ENCODE measurements at regions of chr11 and their contacts with region 1.

Region 1: GRCh38 chr11:16909359-16910035 is 104.7 kb downstream of the PLEKHA7 start:
- DNase-seq: peak; percentile 53
- ATAC-seq: peak; percentile 83
- H3K4me3 ChIP-seq: no peak overlapping the region
- H3K27ac ChIP-seq: peak overlapping the region; percentile 45
- H3K4me1 ChIP-seq: peaks cover 30% of the 10 kb centered on the region
- H3K27me3 ChIP-seq: no peaks in the 10 kb centered on the region
- CTCF ChIP-seq: no peak
- EP300 ChIP-seq: no peak
- POLR2A ChIP-seq: no peak
- RAD21 ChIP-seq: no peak

Region 2: DNA sequence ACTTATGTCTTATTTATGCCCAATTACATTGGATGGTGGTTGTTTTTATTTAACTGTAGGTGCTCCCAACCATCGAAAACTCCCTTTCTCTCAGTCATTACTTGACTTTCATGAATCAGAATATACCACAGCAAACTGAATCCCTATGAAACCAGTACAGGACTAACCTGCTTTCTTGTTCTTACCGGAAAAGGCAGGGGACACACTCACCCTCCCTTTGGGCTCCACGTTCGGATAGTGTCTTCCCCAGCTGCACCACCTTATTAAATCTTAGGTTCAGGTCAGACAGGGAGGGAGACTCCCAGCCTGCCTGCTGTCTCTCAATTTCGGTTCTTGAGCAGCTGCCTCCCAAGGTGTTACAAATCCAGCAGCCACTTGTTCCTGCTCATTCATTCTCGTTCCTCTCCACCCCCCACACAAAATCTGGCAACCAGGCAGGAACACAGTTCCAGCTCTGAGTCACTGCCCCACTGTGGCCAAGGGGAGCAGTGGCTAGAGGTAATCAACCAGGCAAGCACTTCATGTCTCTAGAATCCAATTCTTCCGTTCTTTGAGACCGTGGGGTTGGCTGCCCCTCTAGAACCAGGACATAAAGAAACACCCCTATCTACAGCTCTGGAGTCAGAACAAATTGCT is 28.3 kb before region 1 on chr11:
- CTCF ChIA-PET with region 1: interaction called, 6 read pairs
- POLR2A ChIA-PET with region 1: no interaction called
- RAD21 ChIA-PET with region 1: interaction called, 3 read pairs
- SMC1A ChIA-PET with region 1: interaction called, 17 read pairs
- in situ Hi-C with region 1: no loop called
- intact Hi-C with region 1: no loop called
- DNase-seq: no peak
- ATAC-seq: peak; percentile 72
- H3K4me3 ChIP-seq: no peak overlapping the region
- H3K27ac ChIP-seq: no peak overlapping the region
- H3K4me1 ChIP-seq: peaks cover 3% of the 10 kb centered on the region; the same call in 1 of the 2 replicates
- H3K27me3 ChIP-seq: no peaks in the 10 kb centered on the region; a peak in 1 of 4 replicates
- CTCF ChIP-seq: peak in 1 of 3 experiments; percentile 21; a peak in 2 of 6 replicates
- EP300 ChIP-seq: no peak
- POLR2A ChIP-seq: no peak
- RAD21 ChIP-seq: peak; percentile 29

Region 3: DNA sequence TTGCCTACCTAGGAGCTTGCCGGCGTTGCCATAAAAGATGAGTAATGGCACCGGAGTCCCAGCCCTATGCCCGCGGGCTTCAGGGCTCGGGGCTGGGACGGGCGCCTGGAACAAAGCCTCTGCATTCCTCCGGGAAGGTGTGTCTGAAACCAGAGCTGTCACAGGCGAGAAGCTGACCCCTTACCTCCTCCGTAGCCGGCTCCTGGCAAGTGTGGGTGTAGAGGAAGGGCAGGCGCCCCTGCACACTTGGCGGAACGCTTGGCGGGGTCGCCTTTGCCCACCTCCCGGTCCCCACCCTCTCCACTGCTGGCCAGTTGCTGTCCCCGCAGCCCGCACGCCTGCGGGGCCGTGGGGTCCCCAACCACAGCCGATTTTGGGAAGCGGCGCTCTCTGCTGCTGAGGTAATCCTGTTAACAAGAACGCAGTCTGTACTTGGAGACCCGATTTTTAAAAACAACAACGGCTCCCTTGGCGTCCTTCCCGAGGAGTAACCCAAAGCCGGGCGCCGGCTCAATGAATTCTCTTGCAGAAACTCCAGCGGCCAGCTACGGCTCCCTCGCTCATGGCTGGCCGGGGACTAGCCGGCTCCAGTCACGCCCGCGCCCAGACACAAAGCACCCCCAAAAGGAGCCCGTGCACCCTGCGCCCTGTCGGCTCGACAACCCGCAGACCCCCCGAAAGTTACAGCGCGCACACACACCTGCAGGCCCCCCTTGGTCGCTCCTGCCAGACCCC is 15.5 kb after region 1 on chr11:
- CTCF ChIA-PET with region 1: interaction called, 22 read pairs
- POLR2A ChIA-PET with region 1: interaction called, 4 read pairs
- RAD21 ChIA-PET with region 1: interaction called, 30 read pairs
- SMC1A ChIA-PET with region 1: interaction called, 82 read pairs
- in situ Hi-C with region 1: no loop called
- intact Hi-C with region 1: no loop called
- DNase-seq: no peak
- ATAC-seq: peak; percentile 39
- H3K4me3 ChIP-seq: peak overlapping the region; percentile 64
- H3K27ac ChIP-seq: no peak overlapping the region
- H3K4me1 ChIP-seq: peaks cover 22% of the 10 kb centered on the region
- H3K27me3 ChIP-seq: peaks cover 12 to 13% of the 10 kb centered on the region in 2 experiments
- CTCF ChIP-seq: no peak
- EP300 ChIP-seq: no peak
- POLR2A ChIP-seq: no peak
- RAD21 ChIP-seq: no peak